ENCODE measurements at regions of chr3 and their contacts with region 1.

Region 1: DNA sequence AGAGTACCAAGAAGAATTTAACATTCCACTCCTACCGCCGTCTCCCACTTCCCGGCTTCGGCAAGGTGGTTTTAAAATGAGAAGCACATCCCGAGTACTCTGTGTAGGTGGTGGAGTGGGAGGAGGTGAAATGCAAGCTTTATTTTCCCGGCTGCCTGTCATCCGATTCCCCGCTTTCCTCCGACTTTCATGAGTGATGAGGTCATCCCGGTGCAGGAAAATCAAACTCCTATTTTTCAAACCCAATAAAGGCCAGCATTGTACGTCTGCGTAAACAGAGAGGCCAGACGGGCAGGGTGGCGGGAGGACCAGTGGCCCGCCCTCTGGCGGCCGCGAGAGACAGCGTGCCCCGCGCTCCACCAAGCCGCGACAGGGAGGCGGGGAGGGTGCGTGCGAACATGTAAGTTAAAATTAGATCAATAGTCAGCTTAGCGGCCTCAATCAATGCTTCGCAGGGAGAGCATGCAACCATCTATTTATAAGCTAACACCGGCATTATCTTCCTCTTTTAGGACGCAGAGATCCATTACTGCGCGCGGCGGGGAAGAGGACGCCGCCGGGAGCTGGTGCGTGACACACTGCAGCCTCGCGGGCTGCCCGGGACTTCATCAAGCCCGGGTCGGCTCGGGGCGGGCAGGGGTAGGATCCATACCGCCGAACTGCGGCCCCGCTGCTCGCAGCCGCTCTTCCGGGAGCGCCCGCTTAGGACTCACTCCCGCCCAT is 163.3 kb downstream of the CD47 start:
- DNase-seq: peak; percentile 57 to 84 (median 72)
- H3K4me3 ChIP-seq: peak overlapping the region; percentile 64
- H3K27ac ChIP-seq: no peak overlapping the region
- H3K4me1 ChIP-seq: peaks cover 1% of the 10 kb centered on the region
- H3K27me3 ChIP-seq: no peaks in the 10 kb centered on the region
- CTCF ChIP-seq: peak; percentile 79 to 86 (median 80)
- EP300 ChIP-seq: no peak
- POLR2A ChIP-seq: no peak

Region 2: GRCh38 chr3:107680698-107681097 is 246.8 kb before region 1 on chr3:
- intact Hi-C with region 1: loop called in 1 of 4 experiments (anchors 10 kb)
- DNase-seq: no peak
- H3K4me3 ChIP-seq: no peak overlapping the region
- H3K27ac ChIP-seq: no peak overlapping the region
- H3K4me1 ChIP-seq: no peaks in the 10 kb centered on the region
- H3K27me3 ChIP-seq: no peaks in the 10 kb centered on the region
- CTCF ChIP-seq: no peak
- EP300 ChIP-seq: no peak
- POLR2A ChIP-seq: no peak

Region 3: DNA sequence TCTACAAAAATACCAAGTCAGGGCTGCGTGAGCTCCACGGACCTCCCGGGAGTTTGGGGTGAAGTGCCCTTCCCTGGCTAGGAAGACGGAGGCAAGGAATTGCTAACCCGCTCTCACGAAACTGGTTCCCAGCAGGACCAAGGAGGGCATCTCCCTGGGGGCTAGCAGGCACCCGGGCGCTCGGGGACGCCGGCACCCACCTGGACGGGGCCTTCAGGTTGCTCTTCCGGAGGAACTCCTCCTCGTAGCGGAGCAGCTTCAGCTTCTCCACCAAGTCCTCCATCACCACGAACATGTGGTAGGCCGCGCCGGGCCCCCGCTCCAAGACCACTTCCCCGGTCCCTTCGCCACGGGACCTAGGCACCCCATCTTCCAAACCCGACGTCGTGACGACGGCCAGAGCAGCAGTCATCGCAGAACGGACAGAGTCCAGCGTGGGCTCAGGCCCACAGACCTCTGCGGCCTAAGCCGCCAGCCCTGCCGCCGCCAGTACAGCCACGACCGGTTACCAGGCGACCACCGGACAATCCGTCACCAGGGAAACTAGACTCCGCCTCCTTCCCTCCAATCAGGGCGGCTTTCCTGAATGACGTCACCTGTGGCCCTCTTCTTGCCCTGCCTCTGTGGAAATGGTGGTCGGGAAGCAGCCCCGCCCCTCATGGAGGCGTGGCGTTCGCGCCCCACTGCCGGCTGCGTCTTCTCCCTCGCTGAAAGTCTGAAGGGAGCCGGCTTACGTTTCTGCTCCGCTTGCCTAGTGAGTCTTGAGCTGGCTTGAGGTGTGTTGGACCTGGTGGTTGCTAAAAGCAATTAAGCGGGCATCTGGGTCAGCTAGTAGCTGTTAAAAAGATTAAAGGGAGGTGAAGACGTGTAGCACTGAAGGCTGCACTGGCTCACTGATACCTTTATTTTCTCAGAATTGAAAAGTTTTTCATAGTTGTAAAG is 294.7 kb after region 1 on chr3 and contains the start of gene IFT57:
- intact Hi-C with region 1: loop called in 1 of 4 experiments (anchors 10 kb)
- DNase-seq: peak; percentile 97 to 99 (median 98)
- H3K4me3 ChIP-seq: peak within 1 kb of the TSS; percentile 88
- H3K27ac ChIP-seq: peak within 1 kb of the TSS; percentile 39 to 75
- H3K4me1 ChIP-seq: peaks cover 8% of the 10 kb centered on the region
- H3K27me3 ChIP-seq: no peaks in the 10 kb centered on the region
- CTCF ChIP-seq: no peak
- EP300 ChIP-seq: peak; percentile 32
- POLR2A ChIP-seq: peak; percentile 89
- total RNA-seq, gene IFT57: 41.3 to 155 (median 52.8) TPM

Measured in ovary (tissue), 10 donors.